Caco-2 (cell line): ENCODE measurements at regions of chr12 and their contacts with region 1.

Region 1: GRCh38 chr12:31773867-31774266 is 45.0 kb upstream of the AMN1 start:
- DNase-seq: peak; percentile 59 to 78
- H3K4me3 ChIP-seq: no peak overlapping the region
- H3K4me3 Mint-ChIP-seq: peak overlapping the region; percentile 16
- H3K27ac Mint-ChIP-seq: peak overlapping the region; percentile 89
- H3K4me1 ChIP-seq: peaks cover 32% of the 10 kb centered on the region
- H3K4me1 Mint-ChIP-seq: peaks cover 26% of the 10 kb centered on the region
- H3K27me3 ChIP-seq: no peaks in the 10 kb centered on the region
- H3K27me3 Mint-ChIP-seq: no peaks in the 10 kb centered on the region
- CTCF ChIP-seq: no peak

Region 2: DNA sequence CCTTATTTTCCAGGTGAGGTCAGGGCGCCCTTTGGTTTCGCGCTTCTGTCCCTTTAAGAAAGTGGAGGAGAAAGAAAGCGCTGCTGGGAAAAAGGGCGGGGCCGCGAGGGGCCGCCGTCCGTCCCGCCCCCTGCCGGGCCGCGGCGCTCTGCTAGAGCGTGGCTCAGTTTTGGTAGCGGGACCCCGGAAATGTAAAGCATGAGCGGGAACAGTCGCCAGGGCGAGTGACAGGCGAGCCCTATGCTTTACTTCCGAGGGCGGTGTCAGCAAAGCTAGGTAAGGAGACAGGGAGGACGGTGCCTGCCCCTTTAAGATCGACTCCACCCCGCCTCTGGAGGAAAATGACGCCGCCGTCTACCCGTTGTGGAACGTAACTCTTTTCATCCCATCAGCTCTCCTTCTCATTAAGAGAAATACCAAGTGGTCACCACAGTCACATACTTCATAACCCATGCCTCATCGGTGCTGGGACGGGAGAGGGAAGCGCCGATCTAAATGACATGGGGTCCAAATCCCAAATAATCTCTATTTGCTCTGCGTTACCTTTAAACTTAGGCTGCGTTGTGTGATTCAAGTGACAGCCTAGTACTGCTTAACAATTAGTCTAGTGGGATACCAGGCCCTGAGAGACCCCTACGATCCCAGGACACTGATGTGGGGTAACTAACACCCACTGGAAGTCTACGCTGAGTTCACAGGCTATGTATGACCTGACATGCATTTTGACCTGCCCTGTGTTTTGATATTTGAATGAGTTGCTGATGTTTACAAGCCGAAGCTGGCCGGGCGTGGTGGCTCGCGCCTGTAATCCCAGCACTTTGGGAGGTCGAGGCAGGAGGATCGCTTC is 114.6 kb before region 1 on chr12 and contains the start of gene ETFBKMT:
- CTCF ChIA-PET with region 1: no interaction called
- POLR2A ChIA-PET with region 1: no interaction called
- intact Hi-C with region 1: loop called (anchors 1 kb)
- DNase-seq: peak; percentile 99
- H3K4me3 ChIP-seq: peak within 1 kb of the TSS; percentile 73
- H3K4me3 Mint-ChIP-seq: peak within 1 kb of the TSS; percentile 78
- H3K27ac Mint-ChIP-seq: peak within 1 kb of the TSS; percentile 80
- H3K4me1 ChIP-seq: peaks cover 4% of the 10 kb centered on the region; the same call in 1 of the 2 replicates
- H3K4me1 Mint-ChIP-seq: peaks cover 28% of the 10 kb centered on the region
- H3K27me3 ChIP-seq: no peaks in the 10 kb centered on the region
- H3K27me3 Mint-ChIP-seq: no peaks in the 10 kb centered on the region
- CTCF ChIP-seq: peak; percentile 51 to 74
- total RNA-seq, gene ETFBKMT: 1.6 and 2.1 TPM in 2 replicates

Region 3: GRCh38 chr12:31715283-31715825 is 58.5 kb before region 1 on chr12:
- CTCF ChIA-PET with region 1: no interaction called
- POLR2A ChIA-PET with region 1: interaction called, 3 read pairs
- intact Hi-C with region 1: loop called (anchors 2 kb)
- DNase-seq: peak; percentile 71
- H3K4me3 ChIP-seq: no peak overlapping the region
- H3K4me3 Mint-ChIP-seq: peak overlapping the region; percentile 60
- H3K27ac Mint-ChIP-seq: peak overlapping the region; percentile 88
- H3K4me1 ChIP-seq: peaks cover 21% of the 10 kb centered on the region
- H3K4me1 Mint-ChIP-seq: peaks cover 29% of the 10 kb centered on the region
- H3K27me3 ChIP-seq: no peaks in the 10 kb centered on the region
- H3K27me3 Mint-ChIP-seq: no peaks in the 10 kb centered on the region
- CTCF ChIP-seq: no peak

Region 4: DNA sequence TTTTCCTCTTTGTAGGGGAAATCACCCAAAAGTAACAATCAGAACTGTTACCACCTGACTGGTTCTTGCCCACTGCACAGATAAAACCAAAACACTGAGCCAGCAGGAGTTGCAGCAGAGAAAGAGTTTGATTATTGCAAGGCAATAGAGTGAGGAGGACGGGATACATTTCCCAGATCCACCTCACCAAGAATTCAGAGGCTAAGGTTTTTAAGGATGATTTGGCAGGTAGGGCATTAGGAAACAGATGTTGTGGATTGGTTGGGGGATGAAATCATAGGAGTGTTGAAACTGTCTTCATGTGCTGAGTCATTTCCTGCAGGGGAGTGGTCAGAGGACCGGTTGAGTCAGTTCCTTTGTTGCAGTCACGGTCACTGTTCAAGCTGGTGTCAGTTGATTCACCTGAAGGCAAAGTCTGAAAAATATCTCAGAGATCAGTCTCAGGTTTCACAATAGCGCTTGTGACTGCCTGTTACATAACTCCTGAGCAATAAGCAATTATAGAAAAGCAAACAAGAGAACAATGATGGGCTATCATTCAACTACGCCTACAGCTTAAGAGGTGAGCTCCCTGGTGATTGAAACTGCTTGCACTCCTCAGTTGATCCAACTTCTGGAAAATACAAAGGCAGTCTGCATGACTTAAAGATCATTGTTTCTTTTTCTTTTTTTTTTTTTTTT is 24.7 kb before region 1 on chr12:
- CTCF ChIA-PET with region 1: interaction called, 4 read pairs
- POLR2A ChIA-PET with region 1: no interaction called
- intact Hi-C with region 1: loop called (anchors 1 kb)
- DNase-seq: peak; percentile 92 to 95
- H3K4me3 ChIP-seq: no peak overlapping the region
- H3K4me3 Mint-ChIP-seq: peak overlapping the region; percentile 31
- H3K27ac Mint-ChIP-seq: peak overlapping the region; percentile 96
- H3K4me1 ChIP-seq: peaks cover 18% of the 10 kb centered on the region
- H3K4me1 Mint-ChIP-seq: peaks cover 22% of the 10 kb centered on the region
- H3K27me3 ChIP-seq: no peaks in the 10 kb centered on the region
- H3K27me3 Mint-ChIP-seq: no peaks in the 10 kb centered on the region
- CTCF ChIP-seq: no peak

Region 5: DNA sequence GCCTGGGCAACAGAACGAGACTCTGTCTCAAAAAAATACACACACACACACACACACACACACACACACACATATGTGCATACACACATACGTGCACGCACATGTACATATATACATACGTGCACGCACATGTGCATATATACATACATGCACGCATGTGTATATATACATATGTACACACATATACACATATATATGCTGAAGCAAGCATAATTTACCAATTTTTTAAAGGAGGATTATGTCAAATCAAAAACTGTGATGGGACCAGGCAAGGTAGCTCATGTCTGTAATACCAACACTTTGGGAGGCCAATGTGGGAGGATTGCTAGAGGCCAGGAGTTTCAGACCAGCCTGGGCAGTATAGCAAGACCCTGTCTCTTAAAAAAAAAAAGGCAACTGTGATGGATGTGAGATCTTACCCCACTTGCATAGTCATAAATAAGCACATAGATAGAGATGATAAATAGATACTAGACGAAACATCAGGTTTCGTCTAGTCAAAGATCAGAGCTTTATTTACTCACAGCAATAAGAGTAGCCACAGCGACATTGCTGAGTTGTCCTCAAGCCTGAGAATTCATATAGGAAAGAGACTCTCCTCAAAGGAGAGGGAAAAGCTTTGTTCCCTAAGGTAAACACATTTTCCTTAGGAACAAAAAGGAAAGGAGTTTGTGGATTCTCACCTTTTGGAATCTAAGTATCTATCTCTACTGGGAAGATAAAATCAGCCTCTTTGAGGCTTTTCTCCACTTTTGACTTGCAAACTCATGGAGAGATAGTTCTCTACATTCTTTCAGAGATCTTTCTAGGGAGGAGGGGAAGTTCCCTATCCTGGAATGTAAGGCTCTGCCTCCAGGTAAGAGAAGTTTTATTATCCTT is 29.7 kb after region 1 on chr12:
- CTCF ChIA-PET with region 1: no interaction called
- POLR2A ChIA-PET with region 1: no interaction called
- intact Hi-C with region 1: loop called (anchors 2 kb)
- DNase-seq: no peak
- H3K4me3 ChIP-seq: no peak overlapping the region
- H3K4me3 Mint-ChIP-seq: no peak overlapping the region
- H3K27ac Mint-ChIP-seq: peak overlapping the region; percentile 54
- H3K4me1 ChIP-seq: peaks cover 20% of the 10 kb centered on the region
- H3K4me1 Mint-ChIP-seq: peaks cover 35% of the 10 kb centered on the region
- H3K27me3 ChIP-seq: no peaks in the 10 kb centered on the region
- H3K27me3 Mint-ChIP-seq: no peaks in the 10 kb centered on the region
- CTCF ChIP-seq: no peak

Region 6: DNA sequence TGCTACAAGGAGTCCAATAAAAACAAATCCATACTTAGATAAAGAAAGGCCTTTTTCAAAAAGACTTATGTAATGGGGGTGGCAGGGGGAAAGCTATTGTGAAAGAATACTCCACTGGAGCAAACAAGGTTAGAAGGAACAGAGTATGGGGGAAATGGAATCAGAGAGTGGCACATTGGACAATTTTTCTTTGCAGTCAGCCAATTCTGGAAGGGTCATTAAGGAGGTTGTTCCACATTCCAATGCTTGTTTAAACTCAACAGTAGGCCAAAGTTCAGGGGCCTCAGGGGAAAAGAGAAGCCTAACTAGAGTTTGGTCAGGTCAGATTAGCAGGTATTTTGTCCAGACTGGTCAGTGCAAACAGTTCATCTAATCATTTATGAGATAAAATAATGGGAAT is 80.1 kb after region 1 on chr12:
- CTCF ChIA-PET with region 1: no interaction called
- POLR2A ChIA-PET with region 1: no interaction called
- intact Hi-C with region 1: loop called (anchors 1 kb)
- DNase-seq: peak; percentile 72 to 79
- H3K4me3 ChIP-seq: no peak overlapping the region
- H3K4me3 Mint-ChIP-seq: peak overlapping the region; percentile 11
- H3K27ac Mint-ChIP-seq: peak overlapping the region; percentile 51
- H3K4me1 ChIP-seq: peaks cover 33% of the 10 kb centered on the region
- H3K4me1 Mint-ChIP-seq: peaks cover 17% of the 10 kb centered on the region
- H3K27me3 ChIP-seq: no peaks in the 10 kb centered on the region
- H3K27me3 Mint-ChIP-seq: no peaks in the 10 kb centered on the region
- CTCF ChIP-seq: no peak

Region 7: DNA sequence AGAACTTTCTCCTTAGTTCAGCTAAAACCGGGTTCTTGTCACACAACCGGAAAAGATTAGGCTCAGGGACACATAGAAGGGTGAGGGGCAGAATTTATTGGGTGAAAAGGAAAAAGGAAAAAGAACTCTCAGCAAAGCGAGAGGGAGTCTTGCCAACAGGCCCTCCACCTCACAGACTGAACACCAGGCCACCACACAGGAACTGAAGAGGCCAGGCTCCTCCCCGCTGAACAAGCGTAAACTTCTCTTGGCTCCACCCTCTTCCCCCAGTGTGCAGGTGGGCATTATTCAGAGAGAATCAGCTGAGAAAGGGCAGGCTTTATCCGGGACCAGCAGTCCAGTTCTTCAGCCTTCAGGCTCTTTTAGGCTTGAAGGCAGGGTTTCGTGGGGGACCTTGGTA is 499.8 kb after region 1 on chr12:
- CTCF ChIA-PET with region 1: no interaction called
- POLR2A ChIA-PET with region 1: no interaction called
- intact Hi-C with region 1: loop called (anchors 10 kb)
- DNase-seq: peak in 1 of 2 experiments; percentile 35
- H3K4me3 ChIP-seq: no peak overlapping the region
- H3K4me3 Mint-ChIP-seq: peak overlapping the region; percentile 22
- H3K27ac Mint-ChIP-seq: peak overlapping the region; percentile 61
- H3K4me1 ChIP-seq: peaks cover 47% of the 10 kb centered on the region
- H3K4me1 Mint-ChIP-seq: peaks cover 44% of the 10 kb centered on the region
- H3K27me3 ChIP-seq: no peaks in the 10 kb centered on the region
- H3K27me3 Mint-ChIP-seq: no peaks in the 10 kb centered on the region
- CTCF ChIP-seq: no peak